GM12878 (cell line): ENCODE measurements at regions of chr10 and their contacts with region 1.

Region 1: GRCh38 chr10:88932539-88933256 is 19.9 kb downstream of the ACTA2 start:
- DNase-seq: no peak
- ATAC-seq: peak; percentile 80
- H3K4me3 ChIP-seq: no peak overlapping the region
- H3K27ac ChIP-seq: peak overlapping the region; percentile 56; the same call in 1 of the 2 replicates
- H3K4me1 ChIP-seq: peaks cover 21% of the 10 kb centered on the region
- H3K27me3 ChIP-seq: no peaks in the 10 kb centered on the region
- CTCF ChIP-seq: peak; percentile 85 to 98 (median 95); a peak in 5 of 6 replicates
- EP300 ChIP-seq: no peak
- POLR2A ChIP-seq: no peak
- RAD21 ChIP-seq: peak; percentile 81

Region 2: GRCh38 chr10:88565072-88565471 is 367.6 kb before region 1 on chr10:
- CTCF ChIA-PET with region 1: interaction called, 7 read pairs
- POLR2A ChIA-PET with region 1: no interaction called
- RAD21 ChIA-PET with region 1: interaction called, 11 read pairs
- SMC1A ChIA-PET with region 1: interaction called, 5 read pairs
- in situ Hi-C with region 1: no loop called
- intact Hi-C with region 1: loop called (anchors 2 kb)
- DNase-seq: no peak
- ATAC-seq: peak; percentile 82
- H3K4me3 ChIP-seq: no peak overlapping the region
- H3K27ac ChIP-seq: no peak overlapping the region
- H3K4me1 ChIP-seq: no peaks in the 10 kb centered on the region
- H3K27me3 ChIP-seq: no peaks in the 10 kb centered on the region
- CTCF ChIP-seq: peak; percentile 30 to 63 (median 40); a peak in 5 of 6 replicates
- EP300 ChIP-seq: no peak
- POLR2A ChIP-seq: no peak
- RAD21 ChIP-seq: peak; percentile 73

Region 3: DNA sequence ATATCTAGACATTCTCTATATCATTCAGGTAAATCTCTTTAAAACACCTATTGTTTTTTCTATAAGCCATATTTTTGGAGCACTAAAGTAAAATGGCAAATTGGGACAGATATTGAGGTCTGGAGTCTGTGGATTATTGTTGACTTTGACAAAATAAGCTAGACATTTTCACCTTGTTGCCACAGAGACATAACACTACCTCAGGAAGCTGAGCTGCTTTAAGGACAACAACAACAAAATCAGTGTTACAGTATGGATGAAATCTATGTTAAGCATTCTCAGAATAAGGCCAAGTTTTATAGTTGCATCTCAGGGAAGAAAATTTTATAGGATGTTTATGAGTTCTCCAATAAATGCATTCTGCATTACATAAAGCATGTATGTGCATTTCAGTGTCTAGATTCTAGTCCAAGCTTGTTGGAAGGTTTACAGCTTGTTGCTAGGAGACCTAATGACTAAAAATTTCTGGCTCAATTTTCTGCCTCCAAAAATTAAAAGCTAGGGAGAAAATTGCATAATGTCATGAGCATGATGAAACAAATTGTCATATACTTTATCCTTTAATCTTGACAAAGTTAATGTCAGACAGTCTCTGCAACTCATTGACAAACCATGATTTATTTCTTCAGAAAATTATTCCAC is 111.8 kb before region 1 on chr10:
- CTCF ChIA-PET with region 1: interaction called, 895 read pairs
- POLR2A ChIA-PET with region 1: no interaction called
- RAD21 ChIA-PET with region 1: interaction called, 9 read pairs
- SMC1A ChIA-PET with region 1: interaction called, 575 read pairs
- in situ Hi-C with region 1: no loop called
- intact Hi-C with region 1: no loop called
- DNase-seq: no peak
- ATAC-seq: no peak
- H3K4me3 ChIP-seq: no peak overlapping the region
- H3K27ac ChIP-seq: no peak overlapping the region
- H3K4me1 ChIP-seq: 0 out of 2 replicates have a peak, but pooled peaks cover 3% of the 10 kb centered on the region
- H3K27me3 ChIP-seq: 0 out of 4 replicates have a peak, but pooled peaks cover 0 to 2% of the 10 kb centered on the region in 2 experiments
- CTCF ChIP-seq: no peak
- EP300 ChIP-seq: no peak
- POLR2A ChIP-seq: no peak
- RAD21 ChIP-seq: no peak

Region 4: GRCh38 chr10:88865281-88865876 is 67.3 kb before region 1 on chr10:
- CTCF ChIA-PET with region 1: interaction called, 16 read pairs
- POLR2A ChIA-PET with region 1: interaction called, 5 read pairs
- RAD21 ChIA-PET with region 1: interaction called, 12 read pairs
- SMC1A ChIA-PET with region 1: interaction called, 24 read pairs
- in situ Hi-C with region 1: no loop called
- intact Hi-C with region 1: no loop called
- DNase-seq: no peak
- ATAC-seq: peak; percentile 63; the same call in 2 of the 3 replicates
- H3K4me3 ChIP-seq: no peak overlapping the region
- H3K27ac ChIP-seq: no peak overlapping the region
- H3K4me1 ChIP-seq: no peaks in the 10 kb centered on the region
- H3K27me3 ChIP-seq: no peaks in the 10 kb centered on the region
- CTCF ChIP-seq: peak in 2 of 3 experiments; percentile 24 to 38; a peak in 3 of 6 replicates
- EP300 ChIP-seq: no peak
- POLR2A ChIP-seq: no peak
- RAD21 ChIP-seq: peak; percentile 55; the same call in 1 of the 2 replicates

Region 5: GRCh38 chr10:88901206-88901983 is 31.3 kb before region 1 on chr10:
- CTCF ChIA-PET with region 1: interaction called, 71 read pairs
- POLR2A ChIA-PET with region 1: interaction called, 3 read pairs
- RAD21 ChIA-PET with region 1: interaction called, 74 read pairs
- SMC1A ChIA-PET with region 1: interaction called, 80 read pairs
- in situ Hi-C with region 1: no loop called
- intact Hi-C with region 1: no loop called
- DNase-seq: peak; percentile 94
- ATAC-seq: peak; percentile 89
- H3K4me3 ChIP-seq: peak overlapping the region; percentile 26; the same call in 1 of the 2 replicates
- H3K27ac ChIP-seq: peak overlapping the region; percentile 99
- H3K4me1 ChIP-seq: peaks cover 50% of the 10 kb centered on the region
- H3K27me3 ChIP-seq: no peaks in the 10 kb centered on the region
- CTCF ChIP-seq: no peak
- EP300 ChIP-seq: peak; percentile 84 to 97
- POLR2A ChIP-seq: no peak
- RAD21 ChIP-seq: peak; percentile 15; the same call in 1 of the 2 replicates

Region 6: DNA sequence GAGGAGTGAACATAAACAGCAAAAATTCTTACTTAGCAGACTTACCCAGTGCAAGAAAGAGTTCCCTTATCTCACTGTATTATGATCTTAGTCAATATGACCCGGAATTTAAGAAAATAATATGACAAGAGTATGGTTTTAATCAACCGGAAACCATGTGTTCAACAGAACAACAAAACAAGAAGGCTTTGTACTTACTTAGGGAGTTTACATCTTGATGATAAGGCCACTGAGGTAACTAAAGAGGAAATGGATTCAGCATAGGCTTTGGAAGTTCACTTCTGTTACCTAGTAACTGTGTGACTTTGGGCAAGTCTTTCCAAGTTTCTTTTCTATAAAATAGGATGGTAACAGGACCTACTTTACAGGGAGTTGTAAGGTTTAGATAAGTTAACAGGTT is 50.5 kb after region 1 on chr10:
- CTCF ChIA-PET with region 1: interaction called, 250 read pairs
- POLR2A ChIA-PET with region 1: interaction called, 7 read pairs
- RAD21 ChIA-PET with region 1: interaction called, 39 read pairs
- SMC1A ChIA-PET with region 1: interaction called, 114 read pairs
- in situ Hi-C with region 1: loop called (anchors 5 kb)
- intact Hi-C with region 1: loop called (anchors 1 kb)
- DNase-seq: no peak
- ATAC-seq: no peak
- H3K4me3 ChIP-seq: no peak overlapping the region
- H3K27ac ChIP-seq: no peak overlapping the region
- H3K4me1 ChIP-seq: peaks cover 10% of the 10 kb centered on the region
- H3K27me3 ChIP-seq: no peaks in the 10 kb centered on the region
- CTCF ChIP-seq: no peak
- EP300 ChIP-seq: no peak
- POLR2A ChIP-seq: no peak
- RAD21 ChIP-seq: no peak

Region 7: DNA sequence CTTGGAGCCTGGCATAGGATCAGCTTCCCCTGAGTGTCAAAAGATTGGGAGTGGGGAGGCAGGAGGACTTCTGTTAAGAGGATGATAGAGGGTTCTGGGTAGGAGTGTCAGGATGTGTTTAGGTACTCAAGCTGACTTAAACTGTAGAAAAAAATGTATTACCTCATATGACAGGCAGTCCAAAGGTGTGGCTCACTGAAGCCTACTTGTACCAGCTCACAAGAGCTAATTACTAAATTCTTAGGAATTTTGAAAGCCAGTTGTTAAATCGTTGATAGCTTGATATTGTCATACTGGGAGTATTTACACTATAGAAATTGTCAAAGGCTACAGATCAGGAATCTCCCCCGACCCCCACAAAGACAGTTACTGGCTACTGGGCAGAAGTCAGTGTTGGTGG is 90.0 kb after region 1 on chr10:
- CTCF ChIA-PET with region 1: interaction called, 26 read pairs
- POLR2A ChIA-PET with region 1: interaction called, 3 read pairs
- RAD21 ChIA-PET with region 1: interaction called, 3 read pairs
- SMC1A ChIA-PET with region 1: interaction called, 5 read pairs
- in situ Hi-C with region 1: loop called (anchors 5 kb)
- intact Hi-C with region 1: no loop called
- DNase-seq: no peak
- ATAC-seq: no peak
- H3K4me3 ChIP-seq: no peak overlapping the region
- H3K27ac ChIP-seq: no peak overlapping the region
- H3K4me1 ChIP-seq: no peaks in the 10 kb centered on the region
- H3K27me3 ChIP-seq: no peaks in the 10 kb centered on the region
- CTCF ChIP-seq: no peak
- EP300 ChIP-seq: no peak
- POLR2A ChIP-seq: no peak
- RAD21 ChIP-seq: no peak